Activated T-helper 1 cell treated with anti-CD3 and anti-CD28 coated beads, Interleukin-12 subunit alpha, Interleukin-12 subunit beta, Interleukin-2, Interleukin-4 antibody, amounts not matched to agents 30 ng/mL and 10 ng/mL and 1 ng/mL, durations not matched to agents 14 hours and 24 hours and 36 hours (primary cell): ENCODE measurements at regions of chr9 and their contacts with region 1.

Region 1: GRCh38 chr9:7976167-7976755 is 176.7 kb upstream of the DMAC1 start:
- DNase-seq: peak; percentile 68
- H3K4me3 Mint-ChIP-seq: peak overlapping the region; percentile 15
- H3K27ac Mint-ChIP-seq: peak overlapping the region; percentile 73
- H3K4me1 Mint-ChIP-seq: peaks cover 63% of the 10 kb centered on the region
- H3K27me3 Mint-ChIP-seq: no peaks in the 10 kb centered on the region

Region 2: GRCh38 chr9:7216004-7216831 is 760.0 kb before region 1 on chr9:
- intact Hi-C with region 1: loop called (anchors 10 kb)
- DNase-seq: peak; percentile 59
- H3K4me3 Mint-ChIP-seq: peak overlapping the region; percentile 27
- H3K27ac Mint-ChIP-seq: peak overlapping the region; percentile 52
- H3K4me1 Mint-ChIP-seq: peaks cover 38% of the 10 kb centered on the region
- H3K27me3 Mint-ChIP-seq: peaks cover 24% of the 10 kb centered on the region

Region 3: GRCh38 chr9:7721291-7721690 is 255.0 kb before region 1 on chr9:
- intact Hi-C with region 1: no loop called
- DNase-seq: no peak
- H3K4me3 Mint-ChIP-seq: no peak overlapping the region
- H3K27ac Mint-ChIP-seq: no peak overlapping the region
- H3K4me1 Mint-ChIP-seq: no peaks in the 10 kb centered on the region
- H3K27me3 Mint-ChIP-seq: no peaks in the 10 kb centered on the region

Region 4: GRCh38 chr9:7756088-7756487 is 220.2 kb before region 1 on chr9:
- intact Hi-C with region 1: loop called (anchors 1 kb)
- DNase-seq: peak; percentile 35
- H3K4me3 Mint-ChIP-seq: peak overlapping the region; percentile 21
- H3K27ac Mint-ChIP-seq: peak overlapping the region; percentile 0
- H3K4me1 Mint-ChIP-seq: peaks cover 39% of the 10 kb centered on the region
- H3K27me3 Mint-ChIP-seq: peaks cover 6% of the 10 kb centered on the region

Region 5: DNA sequence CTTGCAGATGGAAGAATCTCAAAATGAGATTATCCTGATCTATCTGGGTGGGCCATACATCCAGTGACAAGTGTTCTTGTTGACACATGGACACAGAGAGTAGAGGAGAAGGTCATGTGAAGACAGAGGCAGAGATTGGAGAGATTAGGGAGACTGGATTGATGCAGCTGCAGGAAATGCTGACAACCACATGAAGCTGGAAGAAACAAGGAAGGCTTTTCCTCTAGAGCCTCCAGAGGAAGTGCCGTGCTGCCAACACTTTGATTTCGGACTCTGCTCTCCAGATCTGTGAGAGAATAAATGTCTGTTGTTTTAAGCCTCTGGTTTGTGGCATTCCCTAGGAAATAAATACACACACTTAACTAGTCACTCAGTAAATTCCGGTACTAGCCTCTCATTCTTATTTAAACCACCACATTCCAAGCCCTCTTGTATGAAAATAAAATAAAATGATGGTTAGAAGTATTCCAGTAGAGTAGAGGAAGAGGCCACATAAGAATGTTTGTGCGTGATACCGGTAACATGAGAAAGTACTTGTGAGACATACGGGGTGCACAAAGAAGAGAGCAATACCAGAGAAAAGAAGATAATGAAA is 65.7 kb before region 1 on chr9:
- intact Hi-C with region 1: loop called (anchors 2 kb)
- DNase-seq: no peak
- H3K4me3 Mint-ChIP-seq: no peak overlapping the region
- H3K27ac Mint-ChIP-seq: no peak overlapping the region
- H3K4me1 Mint-ChIP-seq: no peaks in the 10 kb centered on the region
- H3K27me3 Mint-ChIP-seq: peaks cover 3% of the 10 kb centered on the region

Region 6: GRCh38 chr9:8011974-8012373 is 35.7 kb after region 1 on chr9:
- intact Hi-C with region 1: no loop called
- DNase-seq: no peak
- H3K4me3 Mint-ChIP-seq: no peak overlapping the region
- H3K27ac Mint-ChIP-seq: no peak overlapping the region
- H3K4me1 Mint-ChIP-seq: no peaks in the 10 kb centered on the region
- H3K27me3 Mint-ChIP-seq: no peaks in the 10 kb centered on the region

Region 7: DNA sequence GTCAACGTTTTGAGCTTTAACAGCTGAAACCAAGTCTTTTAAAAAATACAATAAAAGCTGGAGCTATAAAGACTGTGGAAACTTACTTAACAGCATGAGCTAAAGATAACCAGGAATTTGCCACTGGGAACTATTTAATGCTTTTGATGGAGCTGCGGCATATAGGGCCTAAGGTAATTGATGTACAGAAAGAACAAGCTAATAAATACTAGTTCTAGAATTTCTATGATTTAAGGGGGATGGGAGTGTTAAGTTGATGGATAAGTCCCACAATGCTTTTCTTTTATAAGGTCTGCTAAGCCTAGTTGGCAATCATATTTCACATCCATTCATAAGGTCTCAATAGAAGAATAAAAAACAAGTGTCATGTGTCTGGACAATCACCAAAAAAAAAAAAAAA is 157.3 kb after region 1 on chr9:
- intact Hi-C with region 1: no loop called
- DNase-seq: no peak
- H3K4me3 Mint-ChIP-seq: no peak overlapping the region
- H3K27ac Mint-ChIP-seq: no peak overlapping the region
- H3K4me1 Mint-ChIP-seq: no peaks in the 10 kb centered on the region
- H3K27me3 Mint-ChIP-seq: no peaks in the 10 kb centered on the region

Region 8: DNA sequence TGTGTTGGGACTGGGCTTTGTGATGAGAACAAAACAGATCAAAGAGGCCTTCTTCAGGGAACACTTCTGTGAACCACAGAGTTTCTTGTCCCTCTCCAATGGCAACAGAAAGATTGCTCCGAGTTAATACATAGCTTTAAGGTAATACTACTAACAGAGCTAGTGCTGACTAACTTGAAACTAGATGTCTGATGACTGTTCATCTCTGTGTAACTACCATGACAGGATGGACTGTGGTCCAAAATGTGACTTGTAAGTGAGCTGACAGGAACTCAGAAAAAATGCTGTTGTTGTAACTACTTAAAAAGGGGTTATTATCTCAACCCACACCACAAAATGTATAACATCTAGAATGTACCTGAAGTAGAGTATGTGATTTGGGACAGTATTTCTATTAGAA is 453.5 kb after region 1 on chr9:
- intact Hi-C with region 1: loop called (anchors 2 kb)
- DNase-seq: no peak
- H3K4me3 Mint-ChIP-seq: no peak overlapping the region
- H3K27ac Mint-ChIP-seq: peak overlapping the region; percentile 32
- H3K4me1 Mint-ChIP-seq: peaks cover 26% of the 10 kb centered on the region
- H3K27me3 Mint-ChIP-seq: no peaks in the 10 kb centered on the region

Region 9: DNA sequence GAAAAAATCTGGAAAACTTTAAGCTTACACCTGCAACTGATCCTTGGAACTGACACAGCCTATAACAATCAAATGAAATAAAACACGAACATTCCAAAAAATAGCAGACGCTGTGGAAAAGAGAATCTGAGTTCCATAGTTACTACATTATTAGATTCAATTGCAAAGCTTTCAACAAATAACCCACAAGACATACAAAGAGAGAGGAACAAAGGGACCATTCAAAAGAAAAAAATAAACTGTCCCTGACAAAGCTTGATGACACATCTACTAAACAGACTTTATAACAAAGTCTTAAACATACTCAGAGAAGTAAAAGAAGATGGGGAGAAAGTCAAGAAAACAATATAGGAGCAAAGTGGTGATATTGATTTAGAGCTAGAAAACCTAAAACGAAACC is 1512.9 kb after region 1 on chr9:
- intact Hi-C with region 1: no loop called
- DNase-seq: no peak
- H3K4me3 Mint-ChIP-seq: no peak overlapping the region
- H3K27ac Mint-ChIP-seq: no peak overlapping the region
- H3K4me1 Mint-ChIP-seq: no peaks in the 10 kb centered on the region
- H3K27me3 Mint-ChIP-seq: no peaks in the 10 kb centered on the region